ENCODE measurements at regions of chr14 and their contacts with region 1.

Region 1: GRCh38 chr14:58072288-58073071 is 79.5 kb downstream of the ARMH4 start:
- DNase-seq: no peak
- ATAC-seq: peak; percentile 56
- H3K4me3 Mint-ChIP-seq: no peak overlapping the region
- H3K27ac Mint-ChIP-seq: no peak overlapping the region
- H3K4me1 Mint-ChIP-seq: no peaks in the 10 kb centered on the region
- H3K27me3 Mint-ChIP-seq: peaks cover 8% of the 10 kb centered on the region
- CTCF ChIP-seq: no peak

Region 2: DNA sequence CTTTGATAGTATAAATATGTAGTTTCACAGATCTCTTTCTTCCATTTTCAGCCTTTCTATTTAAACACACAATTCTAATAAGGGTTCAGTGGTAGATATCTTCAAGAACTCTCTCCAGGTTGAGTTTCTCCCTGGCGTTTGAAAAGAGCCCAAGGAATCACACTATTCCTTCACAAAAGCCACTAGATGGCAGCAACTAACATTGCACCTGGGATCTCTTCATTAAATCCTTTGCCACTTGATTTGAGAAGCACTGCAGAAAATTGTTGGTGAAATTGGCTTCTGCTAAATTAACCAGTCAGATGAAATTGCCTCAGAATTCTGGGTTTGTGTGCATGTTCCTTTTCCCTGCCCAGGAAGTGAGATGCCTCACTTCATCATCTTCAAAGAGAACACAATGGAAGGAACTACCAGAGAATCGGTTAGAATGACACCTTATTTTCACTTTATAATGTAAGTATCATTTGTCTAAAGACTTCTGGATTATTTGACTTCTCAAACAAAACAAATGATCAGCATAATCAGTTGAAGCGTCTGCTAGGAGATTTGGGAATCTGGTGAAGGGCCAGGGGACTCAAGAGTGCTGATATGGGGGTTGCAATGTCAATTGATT is 585.6 kb before region 1 on chr14:
- CTCF ChIA-PET with region 1: no interaction called
- POLR2A ChIA-PET with region 1: no interaction called
- intact Hi-C with region 1: loop called (anchors 1 kb)
- DNase-seq: no peak
- ATAC-seq: no peak
- H3K4me3 Mint-ChIP-seq: no peak overlapping the region
- H3K27ac Mint-ChIP-seq: no peak overlapping the region
- H3K4me1 Mint-ChIP-seq: no peaks in the 10 kb centered on the region
- H3K27me3 Mint-ChIP-seq: peaks cover 17% of the 10 kb centered on the region
- CTCF ChIP-seq: no peak

Region 3: DNA sequence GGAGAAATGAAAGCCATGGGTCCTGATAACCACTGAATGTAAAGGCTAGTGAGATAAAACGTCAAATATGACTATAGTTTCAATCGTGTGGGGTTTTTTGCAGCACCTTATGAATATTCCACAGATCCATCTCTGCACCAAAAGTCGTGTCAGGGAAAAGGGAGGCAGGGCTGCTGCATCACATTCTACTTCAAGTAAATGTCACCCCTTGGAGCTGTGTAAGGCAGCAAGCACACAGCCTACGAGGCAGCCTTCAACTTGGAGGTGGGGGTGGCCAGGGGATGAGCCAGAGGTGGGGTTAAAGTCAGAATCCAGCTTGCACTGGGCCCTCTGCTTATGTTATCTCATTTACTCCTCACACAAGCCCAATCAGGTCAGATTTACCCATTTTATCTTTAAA is 10.9 kb before region 1 on chr14:
- CTCF ChIA-PET with region 1: interaction called, 10 read pairs
- POLR2A ChIA-PET with region 1: no interaction called
- intact Hi-C with region 1: no loop called
- DNase-seq: no peak
- ATAC-seq: no peak
- H3K4me3 Mint-ChIP-seq: no peak overlapping the region
- H3K27ac Mint-ChIP-seq: no peak overlapping the region
- H3K4me1 Mint-ChIP-seq: no peaks in the 10 kb centered on the region
- H3K27me3 Mint-ChIP-seq: peaks cover 14% of the 10 kb centered on the region
- CTCF ChIP-seq: no peak